ENCODE measurements at regions of chr2 and their contacts with region 1.

Region 1: GRCh38 chr2:188524519-188525113 is 232.9 kb downstream of the GULP1 start:
- DNase-seq: peak; percentile 36
- ATAC-seq: peak; percentile 49

Region 2: GRCh38 chr2:188983427-188984064 is 458.9 kb after region 1 on chr2:
- intact Hi-C with region 1: loop called (anchors 10 kb)
- DNase-seq: no peak
- ATAC-seq: peak; percentile 51